Left ventricle myocardium superior (tissue), 1 donor: ENCODE measurements at regions of chr6 and their contacts with region 1.

Region 1: GRCh38 chr6:79777713-79778579 is 146.8 kb downstream of the SH3BGRL2 start:
- DNase-seq: peak; percentile 88
- ATAC-seq: peak; percentile 95

Region 2: GRCh38 chr6:79813854-79814709 is 36.1 kb after region 1 on chr6:
- intact Hi-C with region 1: loop called (anchors 5 kb)
- DNase-seq: peak; percentile 49
- ATAC-seq: peak; percentile 53

Region 3: DNA sequence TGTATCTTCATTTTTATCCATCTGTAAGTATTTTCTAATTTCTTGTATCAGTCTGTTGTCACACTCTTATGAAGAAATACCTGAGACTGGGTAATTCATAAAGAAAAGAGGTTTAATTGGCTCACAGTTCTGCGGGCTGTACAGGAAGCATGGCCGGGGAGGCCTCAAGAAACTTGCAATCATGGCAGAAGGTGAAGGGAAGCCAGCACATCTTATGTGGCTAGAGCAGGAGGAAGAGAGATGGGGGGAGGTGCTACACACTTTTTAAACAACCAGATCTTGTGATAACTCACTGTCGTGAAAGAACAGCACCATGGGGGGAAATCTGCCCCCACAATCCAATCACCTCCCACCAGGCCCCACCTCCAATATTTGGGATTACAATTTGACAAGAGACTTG is 317.7 kb after region 1 on chr6:
- intact Hi-C with region 1: loop called (anchors 5 kb)
- DNase-seq: no peak
- ATAC-seq: no peak